Heart left ventricle (tissue), 16 donors: ENCODE measurements at regions of chr3 and their contacts with region 1.

Region 1: GRCh38 chr3:156816800-156817645 is 9.1 kb upstream of the LEKR1 start:
- DNase-seq: peak; percentile 82 to 93 (median 88)
- ATAC-seq: peak; percentile 83 to 94 (median 90)
- H3K4me3 ChIP-seq: peak overlapping the region; percentile 40 to 76 (median 66)
- H3K27ac ChIP-seq: peak overlapping the region; percentile 51 to 93 (median 84)
- H3K4me1 ChIP-seq: peaks cover 0 to 32% (median 12%) of the 10 kb centered on the region in 12 donors
- H3K27me3 ChIP-seq: no peaks in the 10 kb centered on the region
- CTCF ChIP-seq: peak in 3 of 12 donors; percentile 23 to 31 (median 25)
- POLR2A ChIP-seq: peak in 1 of 2 donors; percentile 58

Region 2: DNA sequence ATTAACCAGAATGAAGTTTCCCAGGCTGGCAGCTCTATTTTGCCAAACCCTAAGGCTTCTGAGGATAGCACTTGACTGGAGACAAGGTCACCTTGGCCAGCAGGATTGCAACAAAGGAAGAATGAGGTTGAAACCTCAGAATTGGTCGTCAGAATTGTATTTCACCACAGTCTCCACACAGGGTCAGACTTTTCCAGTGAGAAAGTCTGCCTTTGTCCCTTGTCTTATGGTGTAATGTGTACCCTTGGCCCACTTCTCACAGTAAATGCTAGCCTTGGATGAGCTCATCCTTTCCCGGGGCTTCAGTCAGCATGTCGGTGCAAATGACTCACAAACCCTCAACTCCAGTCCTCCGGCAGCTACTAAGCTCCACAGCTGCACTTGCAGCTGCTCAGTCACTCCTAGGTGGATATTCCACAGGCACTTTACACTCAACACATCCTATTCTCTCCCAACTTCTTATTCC is 281.8 kb before region 1 on chr3:
- intact Hi-C with region 1: loop called in 3 of 10 experiments (anchors 10 kb)
- DNase-seq: peak in 4 of 5 donors; percentile 58 to 89 (median 74)
- ATAC-seq: peak; percentile 81 to 96 (median 94)
- H3K4me3 ChIP-seq: no peak overlapping the region
- H3K27ac ChIP-seq: peak overlapping the region; percentile 16 to 84 (median 68)
- H3K4me1 ChIP-seq: peaks cover 0 to 31% (median 15%) of the 10 kb centered on the region in 12 donors
- H3K27me3 ChIP-seq: no peaks in the 10 kb centered on the region
- CTCF ChIP-seq: peak in 7 of 12 donors; percentile 12 to 46 (median 37)
- POLR2A ChIP-seq: no peak

Region 3: GRCh38 chr3:156547637-156548036 is 269.4 kb before region 1 on chr3:
- intact Hi-C with region 1: loop called in 3 of 10 experiments (anchors 10 kb)
- DNase-seq: peak in 1 of 5 donors; percentile 45
- ATAC-seq: peak; percentile 49 to 78 (median 61)
- H3K4me3 ChIP-seq: no peak overlapping the region
- H3K27ac ChIP-seq: peak overlapping the region; percentile 35 to 80 (median 58)
- H3K4me1 ChIP-seq: peaks cover 8 to 99% (median 74%) of the 10 kb centered on the region in 12 donors
- H3K27me3 ChIP-seq: no peaks in the 10 kb centered on the region
- CTCF ChIP-seq: no peak
- POLR2A ChIP-seq: no peak

Region 4: GRCh38 chr3:156674046-156674910 is 142.7 kb before region 1 on chr3 and contains the start of gene TIPARP:
- intact Hi-C with region 1: loop called in 5 of 10 experiments (anchors 2 to 10 kb)
- DNase-seq: peak; percentile 99 to 100 (median 100)
- ATAC-seq: peak; percentile 92 to 98 (median 96)
- H3K4me3 ChIP-seq: peak within 1 kb of the TSS; percentile 66 to 97 (median 80)
- H3K27ac ChIP-seq: peak within 1 kb of the TSS; percentile 88 to 99 (median 96)
- H3K4me1 ChIP-seq: peaks cover 0 to 51% (median 29%) of the 10 kb centered on the region in 12 donors
- H3K27me3 ChIP-seq: no peaks in the 10 kb centered on the region
- CTCF ChIP-seq: peak; percentile 55 to 88 (median 77)
- POLR2A ChIP-seq: peak; percentile 81 to 99
- total RNA-seq, gene TIPARP: 17.8 to 46.8 (median 33.8) TPM

Region 5: DNA sequence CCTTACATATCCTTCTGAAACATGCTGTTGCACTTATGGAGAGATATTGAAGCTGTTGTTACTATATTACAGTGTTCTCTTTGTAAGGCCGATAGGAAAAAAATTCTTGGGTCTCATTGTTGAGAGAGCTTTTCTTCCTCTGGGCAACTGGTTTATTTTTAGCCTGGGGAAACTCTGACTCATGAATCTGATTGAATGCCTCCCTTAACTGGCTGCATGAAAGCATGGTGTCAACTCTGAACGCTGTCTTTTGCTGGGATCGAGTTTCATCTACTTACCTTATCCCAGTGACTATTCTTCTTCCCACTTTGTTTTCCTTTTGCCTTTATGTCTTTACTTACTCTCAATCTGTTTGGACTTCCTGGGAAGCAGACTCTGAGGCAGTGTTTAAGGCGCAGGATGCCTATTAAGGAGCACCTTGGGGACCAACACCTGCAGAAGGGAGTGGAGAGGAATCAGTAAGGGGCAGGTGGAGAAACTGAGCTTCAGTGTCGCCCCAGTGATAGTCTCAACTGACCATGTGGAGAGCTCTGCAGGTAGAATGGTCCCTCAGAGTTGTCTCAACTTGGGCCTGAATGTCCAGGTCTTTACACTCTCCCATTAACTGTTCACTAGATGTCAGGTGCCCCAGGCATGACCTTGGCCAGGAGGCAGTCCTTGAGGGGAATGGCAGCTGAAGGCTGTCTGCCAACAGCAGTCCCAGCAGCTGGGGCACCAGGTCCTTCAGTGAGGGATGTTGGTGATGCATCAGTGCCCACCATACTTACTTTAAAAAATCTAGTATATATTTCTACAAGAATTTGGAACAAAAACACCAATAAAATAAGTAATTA is 431.8 kb after region 1 on chr3:
- intact Hi-C with region 1: no loop called
- DNase-seq: peak; percentile 34 to 70 (median 67)
- ATAC-seq: peak; percentile 94 to 96 (median 94)
- H3K4me3 ChIP-seq: no peak overlapping the region
- H3K27ac ChIP-seq: peak overlapping the region; percentile 76 to 97 (median 86)
- H3K4me1 ChIP-seq: peaks cover 0 to 48% (median 26%) of the 10 kb centered on the region in 12 donors
- H3K27me3 ChIP-seq: no peaks in the 10 kb centered on the region
- CTCF ChIP-seq: no peak
- POLR2A ChIP-seq: no peak